ENCODE measurements at regions of chr3 and their contacts with region 1.

Region 1: DNA sequence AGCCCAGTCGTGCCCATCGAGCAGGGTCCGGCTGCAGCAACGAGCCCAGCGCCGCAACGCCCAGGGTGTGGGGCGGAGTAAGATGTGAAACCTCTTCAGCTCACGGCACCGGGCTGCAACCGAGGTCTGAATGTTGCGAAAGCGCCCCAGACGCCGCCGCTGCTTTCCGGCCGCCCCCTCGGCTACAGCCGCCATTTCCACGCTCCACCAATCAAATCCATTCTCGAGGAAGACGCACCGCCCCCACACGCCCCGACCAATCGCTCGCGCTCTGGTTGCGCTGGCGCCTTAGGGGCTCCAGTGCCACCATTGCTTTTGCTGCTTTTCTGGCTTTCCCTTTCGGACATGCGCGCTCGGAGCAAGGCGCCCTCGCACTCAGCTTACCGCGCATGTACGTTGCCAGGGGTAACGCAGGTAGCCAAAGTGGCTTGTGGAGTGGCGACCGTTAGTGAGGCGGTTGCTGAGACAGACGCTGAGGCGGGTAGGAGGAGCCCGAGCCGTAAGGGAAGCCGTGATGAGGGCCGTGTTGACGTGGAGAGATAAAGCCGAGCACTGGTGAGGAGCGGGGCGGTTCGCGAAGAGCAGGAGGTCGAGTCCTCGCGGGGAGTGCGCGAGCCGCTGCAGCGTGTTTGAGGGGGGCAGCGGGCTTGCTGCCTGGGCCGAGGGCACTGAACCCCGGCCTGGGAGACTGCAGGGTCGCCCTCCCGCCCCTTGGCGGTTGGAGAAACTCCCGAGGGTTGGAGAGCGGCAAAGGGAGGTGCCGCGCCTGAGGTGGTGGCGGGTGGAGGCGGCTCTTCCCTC is at the starts of genes IFT122 and MBD4:
- DNase-seq: peak; percentile 96
- ATAC-seq: peak; percentile 95
- H3K4me3 Mint-ChIP-seq: peak within 1 kb of the TSS; percentile 87
- H3K27ac Mint-ChIP-seq: peak within 1 kb of the TSS; percentile 95
- H3K4me1 Mint-ChIP-seq: peaks cover 41% of the 10 kb centered on the region
- H3K27me3 Mint-ChIP-seq: no peaks in the 10 kb centered on the region
- total RNA-seq, gene IFT122: 23.0 to 25.9 TPM
- total RNA-seq, gene MBD4: 49.0 to 57.6 TPM

Region 2: GRCh38 chr3:129399145-129399894 is 40.7 kb before region 1 on chr3:
- POLR2A ChIA-PET with region 1: interaction called, 26 read pairs
- DNase-seq: peak; percentile 62
- ATAC-seq: peak; percentile 83
- H3K4me3 Mint-ChIP-seq: peak overlapping the region; percentile 99
- H3K27ac Mint-ChIP-seq: peak overlapping the region; percentile 92
- H3K4me1 Mint-ChIP-seq: peaks cover 29% of the 10 kb centered on the region
- H3K27me3 Mint-ChIP-seq: no peaks in the 10 kb centered on the region

Region 3: GRCh38 chr3:129428376-129429079 is 11.5 kb before region 1 on chr3 and contains the start of gene EFCAB12:
- POLR2A ChIA-PET with region 1: interaction called, 38 read pairs
- DNase-seq: peak; percentile 84
- ATAC-seq: peak; percentile 92
- H3K4me3 Mint-ChIP-seq: peak within 1 kb of the TSS; percentile 56
- H3K27ac Mint-ChIP-seq: peak within 1 kb of the TSS; percentile 30
- H3K4me1 Mint-ChIP-seq: peaks cover 39% of the 10 kb centered on the region
- H3K27me3 Mint-ChIP-seq: peaks cover 6% of the 10 kb centered on the region
- total RNA-seq, gene EFCAB12: 1.2 to 1.4 TPM

Region 4: DNA sequence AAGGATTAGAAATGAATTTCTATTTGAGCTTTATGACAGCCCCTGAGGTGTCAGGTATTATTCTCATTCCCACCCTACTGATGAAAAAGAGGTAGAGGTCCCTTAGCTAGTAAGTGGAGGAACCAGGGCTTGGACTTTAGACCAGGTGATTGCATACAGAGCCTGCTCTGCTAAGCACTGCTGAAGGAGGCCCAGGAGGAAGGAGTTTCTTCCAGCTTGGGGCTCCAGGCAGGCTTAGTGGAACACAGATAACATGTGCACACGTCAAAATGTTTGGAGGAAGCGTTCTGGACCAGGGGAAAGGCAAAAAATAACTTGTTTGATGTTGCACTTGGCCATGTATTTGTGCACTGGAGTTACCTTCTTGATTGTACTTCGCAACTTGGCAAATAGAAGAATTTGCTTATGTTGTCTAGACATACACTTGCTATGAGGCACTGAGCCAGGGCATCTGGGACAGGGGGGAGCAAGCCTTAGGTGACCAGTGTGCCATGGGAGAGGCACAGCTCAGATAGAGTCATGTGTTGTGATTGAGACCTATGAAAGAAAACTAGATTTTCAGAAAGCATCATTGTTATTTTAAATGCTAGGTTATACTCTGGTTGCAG is 22.4 kb after region 1 on chr3:
- POLR2A ChIA-PET with region 1: no interaction called
- DNase-seq: no peak
- ATAC-seq: no peak
- H3K4me3 Mint-ChIP-seq: no peak overlapping the region
- H3K27ac Mint-ChIP-seq: no peak overlapping the region
- H3K4me1 Mint-ChIP-seq: peaks cover 15% of the 10 kb centered on the region
- H3K27me3 Mint-ChIP-seq: no peaks in the 10 kb centered on the region

Region 5: DNA sequence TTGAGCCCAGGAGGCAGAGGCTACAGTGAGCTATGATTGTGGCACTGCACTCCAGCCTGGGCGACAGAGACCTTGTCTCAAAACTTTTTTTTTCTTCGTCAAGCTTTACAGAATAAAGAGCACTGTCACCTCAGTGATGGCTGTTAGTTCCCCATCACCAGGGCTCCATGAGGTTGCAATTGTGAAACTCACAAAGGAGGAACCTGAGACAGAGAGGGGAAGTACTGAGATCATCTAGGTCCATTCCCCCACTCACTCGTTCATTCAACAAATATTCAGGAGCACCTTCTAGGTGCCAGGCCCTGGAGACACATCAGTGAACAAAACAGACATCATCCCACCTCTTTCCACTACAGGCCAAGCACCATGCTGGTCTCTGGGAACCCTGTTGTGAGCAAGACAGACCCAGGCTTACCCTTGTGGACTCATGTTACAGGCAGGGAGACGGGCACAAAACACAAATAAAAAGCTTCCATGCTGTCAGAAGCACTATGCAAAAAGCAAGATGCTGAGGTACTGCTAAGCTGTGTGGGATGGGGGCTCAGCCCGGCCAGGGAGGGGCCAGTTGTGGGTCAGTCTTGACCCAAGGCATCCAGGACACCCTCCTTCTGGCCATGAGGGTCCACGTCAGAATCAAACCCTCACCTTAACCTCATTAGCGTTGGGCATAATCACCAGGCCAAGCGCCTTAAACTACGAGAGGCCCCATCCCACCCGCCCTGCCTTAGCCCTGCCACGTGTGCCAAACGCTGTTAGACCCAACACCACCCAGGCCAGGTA is 86.3 kb after region 1 on chr3:
- POLR2A ChIA-PET with region 1: no interaction called
- DNase-seq: no peak
- ATAC-seq: no peak
- H3K4me3 Mint-ChIP-seq: no peak overlapping the region
- H3K27ac Mint-ChIP-seq: no peak overlapping the region
- H3K4me1 Mint-ChIP-seq: no peaks in the 10 kb centered on the region
- H3K27me3 Mint-ChIP-seq: no peaks in the 10 kb centered on the region

Measured in activated naive CD8-positive, alpha-beta T cell treated with anti-CD3 and anti-CD28 coated beads, Interleukin-2, amount 10 ng/mL, durations not matched to agents 7 days and 5 days (primary cell).